ENCODE measurements at regions of chr7 and their contacts with region 1.

Region 1: GRCh38 chr7:101287032-101287431 is 34.6 kb downstream of the IFT22 start:
- DNase-seq: no peak
- ATAC-seq: no peak
- H3K4me3 Mint-ChIP-seq: no peak overlapping the region
- H3K27ac Mint-ChIP-seq: no peak overlapping the region
- H3K4me1 Mint-ChIP-seq: peaks cover 25% of the 10 kb centered on the region
- H3K27me3 Mint-ChIP-seq: peaks cover 22% of the 10 kb centered on the region

Region 2: GRCh38 chr7:101185258-101185839 is 101.7 kb before region 1 on chr7:
- CTCF ChIA-PET with region 1: interaction called, 33 read pairs
- DNase-seq: no peak
- ATAC-seq: no peak
- H3K4me3 Mint-ChIP-seq: no peak overlapping the region
- H3K27ac Mint-ChIP-seq: no peak overlapping the region
- H3K4me1 Mint-ChIP-seq: peaks cover 3% of the 10 kb centered on the region
- H3K27me3 Mint-ChIP-seq: peaks cover 32% of the 10 kb centered on the region

Region 3: GRCh38 chr7:101244375-101245146 is 42.5 kb before region 1 on chr7 and contains the start of gene FIS1:
- CTCF ChIA-PET with region 1: interaction called, 21 read pairs
- DNase-seq: peak; percentile 95
- ATAC-seq: peak; percentile 97
- H3K4me3 Mint-ChIP-seq: peak within 1 kb of the TSS; percentile 91
- H3K27ac Mint-ChIP-seq: peak within 1 kb of the TSS; percentile 94
- H3K4me1 Mint-ChIP-seq: peaks cover 31% of the 10 kb centered on the region
- H3K27me3 Mint-ChIP-seq: no peaks in the 10 kb centered on the region
- total RNA-seq, gene FIS1: 86.7 to 117 TPM

Region 4: DNA sequence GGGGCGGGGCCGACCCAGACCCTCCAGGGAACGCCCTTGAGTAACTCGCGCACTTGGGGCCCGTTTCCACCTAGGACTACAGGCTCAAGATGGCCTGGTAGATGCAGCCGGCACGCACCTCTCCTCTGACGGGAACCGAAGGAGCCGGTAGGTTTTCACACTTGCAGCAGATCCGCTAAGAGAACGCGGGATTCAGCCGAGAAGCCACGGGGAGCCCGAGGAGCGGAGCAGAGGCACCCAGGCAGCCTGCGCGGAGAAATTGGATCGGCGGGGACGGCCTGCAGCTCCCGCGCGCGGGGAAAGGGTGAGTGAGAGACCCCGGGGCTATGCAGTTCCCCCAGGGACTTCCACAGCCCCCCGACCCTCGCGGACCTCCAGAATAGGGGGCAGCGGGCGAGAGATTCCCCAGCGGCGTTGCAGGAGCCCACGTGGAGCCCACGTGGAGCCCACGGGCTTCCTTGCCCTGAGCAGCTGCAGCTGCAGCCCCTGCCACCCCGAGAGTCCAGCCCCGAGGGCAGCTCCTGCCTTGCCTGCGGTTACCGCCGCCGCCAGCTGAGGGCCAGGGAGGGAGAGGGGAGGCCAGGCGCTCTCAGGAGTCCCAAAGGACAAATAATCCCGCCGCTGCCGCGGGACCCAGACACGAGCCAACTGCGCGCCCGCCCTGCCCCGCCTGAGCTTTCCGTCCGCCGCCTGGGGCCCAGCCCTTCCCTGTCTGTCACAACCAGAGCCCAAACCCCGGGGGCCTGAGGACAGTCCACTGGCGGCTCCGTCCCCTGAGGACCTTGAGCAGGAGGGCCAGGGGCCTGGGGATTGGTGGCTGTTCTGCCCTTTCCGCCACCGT is 21.4 kb after region 1 on chr7:
- CTCF ChIA-PET with region 1: interaction called, 10 read pairs
- DNase-seq: peak; percentile 63
- ATAC-seq: peak; percentile 87
- H3K4me3 Mint-ChIP-seq: peak overlapping the region; percentile 82
- H3K27ac Mint-ChIP-seq: peak overlapping the region; percentile 68
- H3K4me1 Mint-ChIP-seq: peaks cover 3% of the 10 kb centered on the region
- H3K27me3 Mint-ChIP-seq: peaks cover 25% of the 10 kb centered on the region

Region 5: GRCh38 chr7:101321491-101322401 is 34.7 kb after region 1 on chr7 and contains the start of gene IFT22:
- CTCF ChIA-PET with region 1: interaction called, 10 read pairs
- DNase-seq: peak; percentile 93
- ATAC-seq: peak; percentile 96
- H3K4me3 Mint-ChIP-seq: peak within 1 kb of the TSS; percentile 84
- H3K27ac Mint-ChIP-seq: peak within 1 kb of the TSS; percentile 75
- H3K4me1 Mint-ChIP-seq: peaks cover 11% of the 10 kb centered on the region
- H3K27me3 Mint-ChIP-seq: peaks cover 2% of the 10 kb centered on the region
- total RNA-seq, gene IFT22: 4.7 to 4.8 TPM